CD14-positive monocyte (primary cell): ENCODE measurements at regions of chr1 and their contacts with region 1.

Region 1: GRCh38 chr1:100249537-100250257 is at the start of gene DBT:
- DNase-seq: peak; percentile 87 to 91 (median 91)
- H3K4me3 ChIP-seq: peak within 1 kb of the TSS; percentile 79 to 97 (median 91)
- H3K4me3 Mint-ChIP-seq: no peak within 1 kb of the TSS
- H3K27ac ChIP-seq: peak within 1 kb of the TSS; percentile 70 to 96
- H3K27ac Mint-ChIP-seq: no peak within 1 kb of the TSS
- H3K4me1 ChIP-seq: peaks cover 13 to 14% of the 10 kb centered on the region in 2 donors
- H3K4me1 Mint-ChIP-seq: peaks cover 10% of the 10 kb centered on the region
- H3K27me3 ChIP-seq: no peaks in the 10 kb centered on the region
- H3K27me3 Mint-ChIP-seq: peaks cover 0 to 2% (median 1%) of the 10 kb centered on the region in 3 donors
- CTCF ChIP-seq: no peak
- polyA plus RNA-seq, gene DBT: 1.1 to 2.7 (median 1.5) TPM

Region 2: DNA sequence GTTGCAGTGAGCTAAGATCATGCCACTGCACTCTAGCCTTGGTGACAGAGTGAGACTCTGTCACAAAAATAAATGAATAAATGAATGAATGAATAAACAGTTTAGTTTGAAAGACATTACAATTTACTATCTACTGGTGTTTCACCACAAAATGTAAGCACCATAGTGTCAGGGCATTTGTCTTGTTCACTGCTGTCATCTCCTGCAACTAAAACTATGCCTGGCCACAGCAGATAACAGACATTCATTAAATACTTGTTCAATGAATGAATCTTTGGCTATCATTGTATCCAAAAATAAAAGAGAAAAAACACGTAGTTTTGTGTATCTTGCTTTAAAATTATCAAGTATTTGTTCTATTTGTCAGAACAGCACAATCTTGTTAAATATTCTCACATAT is 149.5 kb before region 1 on chr1:
- intact Hi-C with region 1: no loop called
- DNase-seq: no peak
- H3K4me3 ChIP-seq: no peak overlapping the region
- H3K4me3 Mint-ChIP-seq: no peak overlapping the region
- H3K27ac ChIP-seq: no peak overlapping the region
- H3K27ac Mint-ChIP-seq: no peak overlapping the region
- H3K4me1 ChIP-seq: no peaks in the 10 kb centered on the region
- H3K4me1 Mint-ChIP-seq: no peaks in the 10 kb centered on the region
- H3K27me3 ChIP-seq: no peaks in the 10 kb centered on the region
- H3K27me3 Mint-ChIP-seq: no peaks in the 10 kb centered on the region
- CTCF ChIP-seq: no peak

Region 3: DNA sequence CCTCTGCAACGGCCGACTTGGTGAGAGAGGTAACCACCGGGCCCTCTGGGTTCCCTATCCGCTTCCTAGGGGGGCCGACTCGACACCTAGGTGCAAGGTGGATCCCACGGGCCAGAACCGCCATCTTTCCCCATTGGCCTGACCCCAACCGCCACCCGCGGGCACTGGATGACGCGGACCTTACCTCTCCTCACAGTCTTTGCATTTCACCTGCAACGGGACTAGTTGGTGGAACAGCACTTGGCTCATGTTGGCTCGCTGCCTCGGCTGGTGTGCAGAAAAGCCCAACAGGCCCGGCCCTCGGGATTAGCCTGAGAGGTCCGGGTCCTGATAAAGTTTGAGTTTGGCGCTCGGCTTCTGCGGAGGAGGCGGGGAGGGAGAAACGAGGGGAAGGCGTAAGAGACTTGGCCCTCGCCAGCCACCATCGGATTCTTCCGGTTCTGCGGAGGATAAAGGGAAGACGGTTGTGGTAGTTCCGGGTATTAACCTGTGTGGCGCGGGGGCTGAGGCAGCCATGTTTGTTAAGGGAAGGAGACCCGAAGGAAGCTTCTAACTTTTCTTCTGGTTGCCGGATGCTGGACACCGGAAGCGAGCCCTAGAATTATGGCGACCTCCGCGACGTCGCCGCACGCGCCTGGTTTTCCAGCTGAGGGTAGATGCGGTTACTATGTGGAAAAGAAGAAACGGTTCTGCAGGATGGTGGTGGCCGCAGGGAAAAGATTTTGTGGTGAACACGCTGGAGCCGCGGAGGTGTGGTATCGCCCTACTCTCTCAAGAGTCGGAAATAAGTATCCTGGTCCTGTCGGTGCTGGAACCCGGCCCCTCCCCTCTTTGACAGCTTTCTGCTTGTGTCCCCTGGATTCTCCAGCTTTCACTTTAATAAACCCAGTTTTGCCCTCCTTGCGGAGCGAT is 116.9 kb before region 1 on chr1 and contains the starts of genes SASS6 and TRMT13:
- intact Hi-C with region 1: loop called in 1 of 2 experiments (anchors 5 kb)
- DNase-seq: peak; percentile 94 to 97 (median 97)
- H3K4me3 ChIP-seq: peak within 1 kb of the TSS; percentile 79 to 99 (median 94)
- H3K4me3 Mint-ChIP-seq: peak within 1 kb of the TSS; percentile 97 to 99
- H3K27ac ChIP-seq: peak within 1 kb of the TSS; percentile 37 to 85
- H3K27ac Mint-ChIP-seq: peak within 1 kb of the TSS; percentile 91 to 97 (median 94)
- H3K4me1 ChIP-seq: peaks cover 14 to 22% of the 10 kb centered on the region in 2 donors
- H3K4me1 Mint-ChIP-seq: peaks cover 21% of the 10 kb centered on the region
- H3K27me3 ChIP-seq: no peaks in the 10 kb centered on the region
- H3K27me3 Mint-ChIP-seq: no peaks in the 10 kb centered on the region
- CTCF ChIP-seq: no peak
- polyA plus RNA-seq, gene SASS6: 0.53 to 0.98 (median 0.93) TPM
- polyA plus RNA-seq, gene TRMT13: 2.2 to 8.1 (median 2.3) TPM